ENCODE measurements at regions of chrX and their contacts with region 1.

Region 1: GRCh38 chrX:150575416-150575808 is 7.0 kb downstream of the MTM1 start:
- DNase-seq: peak; percentile 72
- ATAC-seq: peak; percentile 60
- H3K4me3 Mint-ChIP-seq: peak overlapping the region; percentile 71
- H3K27ac Mint-ChIP-seq: peak overlapping the region; percentile 94
- H3K4me1 Mint-ChIP-seq: peaks cover 84% of the 10 kb centered on the region
- H3K27me3 Mint-ChIP-seq: no peaks in the 10 kb centered on the region
- CTCF ChIP-seq: no peak

Region 2: GRCh38 chrX:150365051-150365989 is 210.1 kb before region 1 on chrX:
- CTCF ChIA-PET with region 1: no interaction called
- POLR2A ChIA-PET with region 1: no interaction called
- intact Hi-C with region 1: loop called (anchors 10 kb)
- DNase-seq: peak; percentile 69
- ATAC-seq: peak; percentile 57
- H3K4me3 Mint-ChIP-seq: peak overlapping the region; percentile 73
- H3K27ac Mint-ChIP-seq: peak overlapping the region; percentile 34
- H3K4me1 Mint-ChIP-seq: peaks cover 22% of the 10 kb centered on the region
- H3K27me3 Mint-ChIP-seq: peaks cover 14% of the 10 kb centered on the region
- CTCF ChIP-seq: peak; percentile 60

Region 3: DNA sequence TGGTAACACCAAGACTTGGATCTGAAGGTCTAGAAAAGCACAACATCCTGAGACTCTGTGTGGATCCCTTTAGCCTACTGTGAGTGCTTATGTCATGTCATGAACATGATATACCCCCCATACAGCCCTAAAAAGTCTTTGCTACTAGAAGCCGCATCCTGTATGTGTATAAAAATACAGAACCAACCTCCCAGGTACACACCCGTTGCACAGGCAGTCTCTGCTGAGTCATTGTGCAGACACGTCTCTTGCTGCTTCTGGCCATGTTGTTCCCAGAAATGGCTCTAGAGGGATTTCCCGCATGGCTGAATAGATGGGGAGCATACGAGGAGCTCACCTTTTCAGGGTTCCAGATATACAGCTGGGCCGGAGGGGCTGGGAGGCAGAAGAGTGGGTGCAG is 118.9 kb before region 1 on chrX:
- CTCF ChIA-PET with region 1: no interaction called
- POLR2A ChIA-PET with region 1: no interaction called
- intact Hi-C with region 1: no loop called
- DNase-seq: no peak
- ATAC-seq: peak; percentile 20
- H3K4me3 Mint-ChIP-seq: no peak overlapping the region
- H3K27ac Mint-ChIP-seq: no peak overlapping the region
- H3K4me1 Mint-ChIP-seq: peaks cover 10% of the 10 kb centered on the region
- H3K27me3 Mint-ChIP-seq: no peaks in the 10 kb centered on the region
- CTCF ChIP-seq: no peak

Region 4: DNA sequence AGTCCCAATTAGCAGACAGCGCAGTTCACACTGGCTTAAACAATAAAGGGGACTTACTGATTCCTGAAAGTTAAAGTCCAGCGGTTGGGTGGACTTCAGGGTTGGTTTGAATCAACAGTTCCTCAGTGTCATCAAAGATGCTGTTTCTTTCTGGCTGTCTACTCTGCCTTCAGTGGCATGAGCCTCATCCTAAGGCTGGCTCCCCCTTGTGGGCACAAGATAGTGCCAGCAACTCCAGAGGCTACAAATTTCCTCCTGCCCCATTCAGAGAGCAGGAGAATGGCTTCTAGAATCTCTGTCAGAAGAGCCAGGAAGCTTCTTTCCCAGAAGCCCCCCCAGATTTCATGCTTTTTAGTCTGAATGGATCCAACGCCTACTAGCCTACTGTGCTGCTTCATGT is 89.4 kb before region 1 on chrX:
- CTCF ChIA-PET with region 1: interaction called, 3 read pairs
- POLR2A ChIA-PET with region 1: interaction called, 3 read pairs
- intact Hi-C with region 1: loop called (anchors 2 kb)
- DNase-seq: peak; percentile 59
- ATAC-seq: peak; percentile 38
- H3K4me3 Mint-ChIP-seq: no peak overlapping the region
- H3K27ac Mint-ChIP-seq: no peak overlapping the region
- H3K4me1 Mint-ChIP-seq: peaks cover 24% of the 10 kb centered on the region
- H3K27me3 Mint-ChIP-seq: no peaks in the 10 kb centered on the region
- CTCF ChIP-seq: peak; percentile 33

Region 5: DNA sequence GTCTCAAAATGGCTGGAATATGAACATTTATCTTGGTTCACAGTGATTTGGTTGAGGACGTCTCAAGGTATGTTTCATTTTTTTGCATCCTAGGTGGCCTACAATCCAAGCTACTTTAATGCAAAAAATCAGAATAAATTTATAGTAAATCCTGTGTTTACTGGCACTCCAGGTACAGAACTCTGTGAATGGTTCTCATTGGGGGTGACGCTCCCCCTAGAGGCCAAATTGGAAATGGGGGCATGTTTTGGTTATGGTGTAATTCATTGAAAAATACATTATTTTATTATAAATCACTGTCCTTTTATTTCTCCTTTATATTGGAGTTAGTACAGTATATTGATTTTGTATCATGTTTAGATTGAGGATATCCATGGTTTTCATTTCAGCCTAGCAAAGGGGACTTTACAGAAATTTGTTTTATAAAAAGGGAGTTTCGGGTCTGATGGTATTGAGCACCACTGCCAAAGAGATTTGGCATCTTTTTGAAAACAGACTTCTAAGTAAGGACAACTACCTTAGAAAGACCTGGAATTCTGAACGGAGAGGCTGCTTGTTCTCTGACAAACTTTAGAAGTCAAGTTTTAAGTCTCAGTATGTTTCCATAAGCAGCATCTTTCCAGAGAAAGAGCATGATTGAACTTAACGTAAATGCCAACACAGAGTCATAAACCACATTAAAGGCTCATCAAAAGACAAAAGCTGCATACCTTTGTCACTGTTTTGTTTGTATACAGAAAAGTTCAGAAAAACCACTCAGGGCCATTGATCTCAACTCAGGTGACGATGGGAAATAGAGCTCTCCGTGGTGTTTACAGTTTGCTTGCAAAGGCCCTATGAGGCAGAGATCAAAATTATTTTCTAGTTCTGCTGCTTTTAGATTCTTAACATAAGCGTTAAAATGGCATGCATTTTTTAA is 12.4 kb after region 1 on chrX:
- CTCF ChIA-PET with region 1: interaction called, 13 read pairs
- POLR2A ChIA-PET with region 1: no interaction called
- intact Hi-C with region 1: no loop called
- DNase-seq: peak; percentile 68
- ATAC-seq: peak; percentile 45
- H3K4me3 Mint-ChIP-seq: no peak overlapping the region
- H3K27ac Mint-ChIP-seq: no peak overlapping the region
- H3K4me1 Mint-ChIP-seq: peaks cover 19% of the 10 kb centered on the region
- H3K27me3 Mint-ChIP-seq: no peaks in the 10 kb centered on the region
- CTCF ChIP-seq: peak; percentile 53

Region 6: DNA sequence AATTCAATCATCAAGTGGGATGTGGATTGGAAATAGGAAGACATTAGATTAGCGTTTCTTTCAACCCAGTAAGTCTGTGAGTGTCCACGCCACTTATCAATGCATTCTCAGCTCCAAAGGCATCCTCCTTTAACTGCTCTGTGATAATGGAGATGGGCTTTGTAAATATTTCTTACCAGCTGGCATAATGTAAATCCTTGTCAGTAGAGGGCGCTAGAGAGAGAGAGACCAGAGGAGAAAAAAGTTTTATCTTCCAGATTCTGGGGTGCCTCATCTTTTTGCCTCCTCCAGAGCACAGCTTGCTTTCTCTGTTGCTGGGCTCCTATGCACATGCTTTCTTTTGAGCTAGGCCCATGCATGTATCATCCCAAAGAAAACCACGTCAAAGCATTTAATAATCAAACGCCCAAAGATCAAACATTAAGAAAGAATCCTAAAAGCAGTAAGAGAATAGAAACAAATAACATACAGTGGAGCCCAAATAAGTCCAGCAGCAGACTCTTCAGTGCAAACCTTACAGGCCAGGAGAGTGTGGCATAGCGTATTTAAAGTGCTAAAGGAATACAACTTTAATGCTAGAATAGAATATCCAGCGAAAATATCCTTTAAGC is 108.2 kb after region 1 on chrX:
- CTCF ChIA-PET with region 1: no interaction called
- POLR2A ChIA-PET with region 1: no interaction called
- intact Hi-C with region 1: no loop called
- DNase-seq: peak; percentile 17
- ATAC-seq: peak; percentile 53
- H3K4me3 Mint-ChIP-seq: no peak overlapping the region
- H3K27ac Mint-ChIP-seq: no peak overlapping the region
- H3K4me1 Mint-ChIP-seq: peaks cover 8% of the 10 kb centered on the region
- H3K27me3 Mint-ChIP-seq: no peaks in the 10 kb centered on the region
- CTCF ChIP-seq: peak; percentile 65

Region 7: DNA sequence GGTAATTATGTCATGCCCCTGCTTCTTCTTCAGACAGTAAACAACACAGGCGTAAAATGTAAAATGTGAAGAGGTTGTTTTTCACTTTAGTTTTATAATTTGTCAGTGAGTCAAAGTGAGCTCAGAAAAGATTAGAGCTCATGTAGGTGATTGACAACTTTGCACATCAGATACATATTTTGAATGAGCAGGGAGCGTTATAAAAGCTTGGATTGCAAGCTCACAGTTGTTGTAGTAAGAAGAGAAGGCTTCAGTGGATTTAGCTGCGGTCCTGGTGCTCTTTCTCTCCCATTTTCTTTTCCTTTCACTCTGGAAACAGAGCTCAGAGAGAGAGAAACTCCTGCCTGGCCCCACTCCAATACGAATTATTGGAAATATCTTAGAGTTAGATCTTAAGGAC is 144.2 kb after region 1 on chrX:
- CTCF ChIA-PET with region 1: no interaction called
- POLR2A ChIA-PET with region 1: no interaction called
- intact Hi-C with region 1: no loop called
- DNase-seq: no peak
- ATAC-seq: no peak
- H3K4me3 Mint-ChIP-seq: no peak overlapping the region
- H3K27ac Mint-ChIP-seq: no peak overlapping the region
- H3K4me1 Mint-ChIP-seq: peaks cover 27% of the 10 kb centered on the region
- H3K27me3 Mint-ChIP-seq: no peaks in the 10 kb centered on the region
- CTCF ChIP-seq: no peak